ENCODE measurements at regions of chr4 and their contacts with region 1.

Region 1: GRCh38 chr4:82284858-82285805 is 88.7 kb downstream of the HNRNPD start:
- DNase-seq: peak; percentile 100
- ATAC-seq: peak; percentile 92
- H3K4me3 Mint-ChIP-seq: peak overlapping the region; percentile 83
- H3K27ac Mint-ChIP-seq: peak overlapping the region; percentile 77
- H3K4me1 Mint-ChIP-seq: peaks cover 21% of the 10 kb centered on the region
- H3K27me3 Mint-ChIP-seq: no peaks in the 10 kb centered on the region
- CTCF ChIP-seq: peak; percentile 97

Region 2: DNA sequence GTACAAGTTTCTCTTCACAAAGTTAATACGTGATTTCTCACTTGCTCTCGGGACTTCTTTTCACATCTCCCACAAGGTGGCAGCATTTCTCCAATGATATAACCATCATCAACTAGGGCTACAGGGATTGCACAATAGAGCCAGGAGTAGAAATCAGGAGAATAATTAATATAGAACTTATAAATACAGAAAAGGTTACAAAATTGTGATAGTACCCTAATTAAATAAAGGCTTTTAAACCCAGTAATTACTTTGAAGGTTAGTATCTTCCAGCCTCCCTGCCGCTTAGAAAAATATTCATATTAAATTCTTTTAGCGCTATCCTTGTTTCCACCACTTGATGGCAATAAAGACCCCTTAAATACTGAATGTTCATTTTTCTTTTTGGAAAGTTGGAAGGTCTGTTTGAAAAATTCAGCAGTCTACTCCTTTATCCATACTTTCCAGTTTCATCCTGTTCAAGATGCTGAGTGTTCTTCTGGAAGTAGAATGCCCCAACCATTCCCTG is 879.2 kb before region 1 on chr4:
- CTCF ChIA-PET with region 1: interaction called, 4 read pairs
- POLR2A ChIA-PET with region 1: no interaction called
- intact Hi-C with region 1: loop called (anchors 1 kb)
- DNase-seq: no peak
- ATAC-seq: peak; percentile 81
- H3K4me3 Mint-ChIP-seq: no peak overlapping the region
- H3K27ac Mint-ChIP-seq: no peak overlapping the region
- H3K4me1 Mint-ChIP-seq: peaks cover 3% of the 10 kb centered on the region
- H3K27me3 Mint-ChIP-seq: peaks cover 3% of the 10 kb centered on the region
- CTCF ChIP-seq: peak; percentile 93

Region 3: DNA sequence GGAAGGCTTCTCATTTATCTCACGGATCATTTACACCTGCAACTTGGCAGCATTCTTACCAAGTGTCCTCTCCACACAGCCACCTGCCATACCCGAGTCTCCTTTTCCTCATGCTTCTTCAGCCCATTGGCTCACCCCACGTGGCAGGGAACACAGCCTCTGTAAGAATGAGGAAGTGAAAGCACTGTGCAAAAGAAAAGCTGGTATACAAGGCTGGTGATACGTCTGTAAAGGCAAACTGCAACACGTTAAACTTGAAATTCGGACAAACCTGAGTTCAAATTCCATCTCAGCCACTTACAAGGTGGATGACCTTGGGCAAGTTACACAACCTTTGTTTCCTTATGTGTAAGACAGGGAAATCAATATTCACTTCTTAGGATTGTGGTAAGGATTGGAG is 649.4 kb before region 1 on chr4:
- CTCF ChIA-PET with region 1: no interaction called
- POLR2A ChIA-PET with region 1: no interaction called
- intact Hi-C with region 1: no loop called
- DNase-seq: peak; percentile 26
- ATAC-seq: peak; percentile 65
- H3K4me3 Mint-ChIP-seq: peak overlapping the region; percentile 55
- H3K27ac Mint-ChIP-seq: peak overlapping the region; percentile 82
- H3K4me1 Mint-ChIP-seq: peaks cover 54% of the 10 kb centered on the region
- H3K27me3 Mint-ChIP-seq: no peaks in the 10 kb centered on the region
- CTCF ChIP-seq: no peak

Region 4: DNA sequence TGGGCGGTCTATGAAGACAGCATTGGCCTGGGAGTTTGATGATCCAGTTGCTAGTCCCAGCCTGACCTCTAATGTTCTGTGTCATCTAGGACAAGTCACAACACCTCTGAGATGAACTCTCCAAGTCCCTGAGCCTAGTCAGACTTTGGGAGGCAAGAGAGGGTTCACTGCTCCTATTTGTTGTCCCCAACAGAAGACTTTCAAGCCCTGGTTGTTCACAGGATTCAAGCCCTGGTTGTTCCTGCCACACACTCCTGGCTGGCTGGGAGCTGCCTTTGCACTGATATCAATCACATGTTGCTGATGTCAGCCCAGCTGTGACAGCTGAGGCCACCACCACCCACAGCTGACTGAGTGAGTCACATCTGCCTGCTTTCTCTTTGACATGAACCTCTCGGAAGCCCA is 560.2 kb before region 1 on chr4:
- CTCF ChIA-PET with region 1: no interaction called
- POLR2A ChIA-PET with region 1: no interaction called
- intact Hi-C with region 1: loop called (anchors 10 kb)
- DNase-seq: peak; percentile 18
- ATAC-seq: peak; percentile 93
- H3K4me3 Mint-ChIP-seq: no peak overlapping the region
- H3K27ac Mint-ChIP-seq: peak overlapping the region; percentile 3
- H3K4me1 Mint-ChIP-seq: peaks cover 18% of the 10 kb centered on the region
- H3K27me3 Mint-ChIP-seq: peaks cover 3% of the 10 kb centered on the region
- CTCF ChIP-seq: no peak

Region 5: GRCh38 chr4:82005158-82005557 is 280.0 kb before region 1 on chr4:
- CTCF ChIA-PET with region 1: no interaction called
- POLR2A ChIA-PET with region 1: no interaction called
- intact Hi-C with region 1: no loop called
- DNase-seq: no peak
- ATAC-seq: no peak
- H3K4me3 Mint-ChIP-seq: no peak overlapping the region
- H3K27ac Mint-ChIP-seq: no peak overlapping the region
- H3K4me1 Mint-ChIP-seq: no peaks in the 10 kb centered on the region
- H3K27me3 Mint-ChIP-seq: peaks cover 12% of the 10 kb centered on the region
- CTCF ChIP-seq: no peak

Region 6: DNA sequence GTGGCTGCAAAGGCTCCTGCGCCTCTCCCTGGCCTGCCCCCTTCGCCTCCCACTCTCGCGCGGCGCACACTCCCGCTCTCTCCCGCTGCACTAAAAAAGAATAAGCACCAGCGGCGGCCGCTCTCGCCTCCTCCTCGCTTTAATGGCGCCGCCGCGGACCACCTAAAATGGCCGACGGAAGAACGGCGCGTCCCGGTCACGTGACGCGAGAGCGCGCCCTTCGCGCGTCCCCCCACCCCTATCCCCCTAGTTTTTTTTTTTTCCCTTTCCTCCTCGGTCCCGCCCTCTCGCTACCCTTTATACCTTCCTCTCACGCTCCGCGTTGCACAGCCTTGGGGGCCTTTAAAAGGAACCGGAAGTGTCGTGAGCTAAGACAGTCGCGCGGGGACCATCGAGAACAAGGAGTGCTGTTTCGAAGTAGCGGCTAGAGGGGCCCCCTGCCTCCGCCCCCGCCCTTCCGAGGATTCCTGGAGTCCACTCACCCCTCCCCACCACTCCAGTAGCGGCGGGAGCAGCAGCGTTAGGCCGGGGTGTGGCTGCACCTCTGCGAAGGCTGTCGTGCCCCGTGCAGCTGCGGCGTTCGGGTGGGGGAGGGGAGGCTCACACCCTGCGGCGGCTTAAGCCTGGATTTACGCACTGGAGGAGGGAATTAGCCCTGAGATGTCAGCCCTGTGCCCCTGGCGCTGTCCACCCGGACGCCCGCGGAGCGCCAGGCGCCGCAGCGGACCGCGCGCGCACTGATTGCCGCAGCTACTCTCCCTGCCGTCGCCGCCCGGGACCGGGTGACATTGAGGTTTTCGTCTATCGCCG is 88.9 kb after region 1 on chr4 and contains the start of gene HNRNPD:
- CTCF ChIA-PET with region 1: no interaction called
- POLR2A ChIA-PET with region 1: interaction called, 9 read pairs
- intact Hi-C with region 1: loop called (anchors 1 kb)
- DNase-seq: peak; percentile 83
- ATAC-seq: peak; percentile 88
- H3K4me3 Mint-ChIP-seq: peak within 1 kb of the TSS; percentile 98
- H3K27ac Mint-ChIP-seq: peak within 1 kb of the TSS; percentile 100
- H3K4me1 Mint-ChIP-seq: peaks cover 55% of the 10 kb centered on the region
- H3K27me3 Mint-ChIP-seq: no peaks in the 10 kb centered on the region
- CTCF ChIP-seq: no peak
- total RNA-seq, gene HNRNPD: 300 and 350 TPM in 2 replicates

Region 7: DNA sequence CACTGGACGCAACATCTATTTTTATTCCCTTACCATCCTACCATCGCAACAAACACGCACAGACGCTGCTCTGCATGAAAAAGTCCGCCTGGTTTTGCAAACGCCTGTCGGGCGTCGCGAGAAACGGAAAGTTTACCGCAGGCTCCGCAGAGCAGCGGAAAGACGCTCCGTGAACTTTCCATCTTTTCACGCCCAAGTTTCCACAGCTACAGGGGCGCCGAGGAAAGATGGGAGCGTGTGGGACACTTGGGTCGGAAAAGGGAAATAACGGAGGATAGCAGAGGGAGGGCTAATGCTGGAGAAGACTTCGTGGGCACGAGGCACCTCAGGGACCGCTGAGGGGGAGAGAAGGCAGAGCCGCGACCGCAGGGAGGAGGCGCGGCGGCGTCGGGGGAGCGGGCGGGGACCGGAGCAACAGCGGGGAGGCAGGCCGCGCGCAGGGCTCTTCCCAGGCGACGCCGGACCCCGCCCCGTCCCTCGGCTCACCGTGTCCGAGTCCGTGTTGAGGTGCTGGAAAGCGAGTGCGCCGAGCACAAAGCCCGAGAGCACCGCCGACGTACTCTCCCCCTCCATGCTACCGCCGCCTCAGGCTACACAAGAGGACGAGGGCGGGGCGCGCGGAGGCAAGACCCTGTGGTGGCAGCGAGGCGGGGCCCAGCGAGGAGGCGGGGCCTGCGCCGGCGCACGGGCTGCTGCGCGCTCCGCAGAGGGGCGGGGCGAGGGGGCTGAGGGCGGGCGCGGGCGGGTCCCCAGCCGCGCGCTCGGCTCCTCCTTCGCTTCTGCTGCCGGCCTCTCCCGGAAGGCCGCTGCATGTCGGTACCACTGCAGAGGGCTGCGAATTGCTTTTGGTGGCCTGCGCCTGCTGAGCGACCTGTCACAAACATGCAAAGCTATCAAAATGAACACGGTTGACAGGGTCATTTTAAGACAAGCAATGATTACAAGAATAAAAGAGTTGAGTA is 1199.6 kb after region 1 on chr4 and contains the start of gene ABRAXAS1:
- CTCF ChIA-PET with region 1: no interaction called
- POLR2A ChIA-PET with region 1: no interaction called
- intact Hi-C with region 1: loop called (anchors 10 kb)
- DNase-seq: peak; percentile 96
- ATAC-seq: peak; percentile 97
- H3K4me3 Mint-ChIP-seq: peak within 1 kb of the TSS; percentile 93
- H3K27ac Mint-ChIP-seq: peak within 1 kb of the TSS; percentile 94
- H3K4me1 Mint-ChIP-seq: peaks cover 19% of the 10 kb centered on the region
- H3K27me3 Mint-ChIP-seq: no peaks in the 10 kb centered on the region
- CTCF ChIP-seq: no peak
- total RNA-seq, gene ABRAXAS1: 23.5 and 24.2 TPM in 2 replicates